HepG2 (cell line): ENCODE measurements at regions of chr10 and their contacts with region 1.

Region 1: GRCh38 chr10:78972947-78973900 is 95.5 kb upstream of the ZMIZ1 start:
- DNase-seq: peak; percentile 97
- ATAC-seq: peak; percentile 72
- H3K4me3 ChIP-seq: peak overlapping the region; percentile 40 to 76 (median 59)
- H3K27ac ChIP-seq: peak overlapping the region; percentile 98
- H3K4me1 ChIP-seq: peaks cover 92% of the 10 kb centered on the region
- H3K27me3 ChIP-seq: no peaks in the 10 kb centered on the region
- CTCF ChIP-seq: peak; percentile 18; the same call in 1 of the 2 replicates
- EP300 ChIP-seq: peak; percentile 21 to 74; a peak in 2 of 4 replicates
- POLR2A ChIP-seq: peak in 1 of 2 experiments; percentile 80; a peak in 2 of 4 replicates
- RAD21 ChIP-seq: peak; percentile 65; the same call in 1 of the 2 replicates

Region 2: GRCh38 chr10:78458983-78459638 is 514.1 kb before region 1 on chr10:
- CTCF ChIA-PET with region 1: no interaction called
- POLR2A ChIA-PET with region 1: interaction called, 5 read pairs
- in situ Hi-C with region 1: no loop called
- intact Hi-C with region 1: loop called (anchors 2 kb)
- DNase-seq: peak; percentile 99
- ATAC-seq: peak; percentile 97
- H3K4me3 ChIP-seq: peak overlapping the region in 1 of 3 experiments; percentile 37; a peak in 1 of 6 replicates
- H3K27ac ChIP-seq: peak overlapping the region; percentile 97
- H3K4me1 ChIP-seq: peaks cover 72% of the 10 kb centered on the region
- H3K27me3 ChIP-seq: no peaks in the 10 kb centered on the region
- CTCF ChIP-seq: peak; percentile 16; the same call in 1 of the 2 replicates
- EP300 ChIP-seq: peak; percentile 99 to 100
- POLR2A ChIP-seq: peak; percentile 39 to 63; a peak in 2 of 4 replicates
- RAD21 ChIP-seq: no peak

Region 3: GRCh38 chr10:78817361-78817760 is 155.9 kb before region 1 on chr10:
- CTCF ChIA-PET with region 1: no interaction called
- POLR2A ChIA-PET with region 1: no interaction called
- in situ Hi-C with region 1: no loop called
- intact Hi-C with region 1: no loop called
- DNase-seq: no peak
- ATAC-seq: no peak
- H3K4me3 ChIP-seq: no peak overlapping the region
- H3K27ac ChIP-seq: no peak overlapping the region
- H3K4me1 ChIP-seq: peaks cover 11% of the 10 kb centered on the region
- H3K27me3 ChIP-seq: 0 out of 5 replicates have a peak, but pooled peaks cover 0 to 5% of the 10 kb centered on the region in 2 experiments
- CTCF ChIP-seq: no peak
- EP300 ChIP-seq: no peak
- POLR2A ChIP-seq: no peak
- RAD21 ChIP-seq: no peak

Region 4: DNA sequence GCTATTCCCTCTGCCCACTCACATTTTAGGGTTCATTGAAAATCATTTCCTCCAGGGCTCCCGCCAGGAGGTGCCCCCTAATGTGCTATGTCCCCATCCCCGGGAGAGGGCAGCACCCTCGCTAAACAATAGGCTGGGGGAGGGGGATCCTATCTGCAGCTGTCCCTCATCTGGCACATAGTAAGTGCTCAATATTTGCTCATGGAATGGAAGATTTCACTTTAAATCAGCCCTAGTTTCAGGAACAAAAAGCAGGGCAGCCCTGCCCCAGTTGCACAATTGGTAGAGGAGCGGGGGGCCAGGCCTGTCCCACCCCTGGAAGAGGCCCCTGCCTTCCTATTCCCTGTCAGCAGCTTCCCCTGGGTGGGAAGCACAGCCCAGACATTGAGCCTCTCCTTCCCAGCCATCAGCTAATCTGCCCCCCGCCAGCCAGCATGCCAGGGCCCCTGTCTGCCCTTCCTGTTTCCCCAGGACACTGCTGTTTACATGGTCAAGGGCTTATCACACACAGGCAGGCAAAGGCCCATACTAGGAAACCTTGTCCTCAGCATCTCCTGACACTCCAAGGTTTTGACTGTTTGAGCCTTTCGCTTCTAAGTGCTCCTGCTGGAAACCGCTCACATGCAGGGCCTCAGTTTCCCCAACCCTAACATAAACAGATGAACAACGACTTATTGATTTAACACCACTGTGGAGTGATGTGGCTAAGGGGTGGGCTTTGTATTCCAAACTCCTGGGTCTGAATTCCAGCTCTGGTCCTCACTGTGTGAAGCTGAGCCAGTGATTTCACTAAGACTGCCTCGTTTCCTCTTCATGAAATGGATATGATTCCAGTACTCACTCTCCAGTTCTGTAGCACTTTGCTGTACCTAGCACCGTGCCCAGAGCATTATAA is 35.2 kb before region 1 on chr10:
- CTCF ChIA-PET with region 1: no interaction called
- POLR2A ChIA-PET with region 1: interaction called, 3 read pairs
- in situ Hi-C with region 1: no loop called
- intact Hi-C with region 1: loop called (anchors 2 kb)
- DNase-seq: peak; percentile 61
- ATAC-seq: peak; percentile 91
- H3K4me3 ChIP-seq: peak overlapping the region in 1 of 3 experiments; percentile 39; a peak in 1 of 6 replicates
- H3K27ac ChIP-seq: no peak overlapping the region
- H3K4me1 ChIP-seq: peaks cover 38% of the 10 kb centered on the region
- H3K27me3 ChIP-seq: peaks cover 0 to 7% of the 10 kb centered on the region in 2 experiments; a peak in 3 of 5 replicates
- CTCF ChIP-seq: peak; percentile 48
- EP300 ChIP-seq: peak in 1 of 2 experiments; percentile 42; a peak in 2 of 4 replicates
- POLR2A ChIP-seq: no peak
- RAD21 ChIP-seq: peak; percentile 51

Region 5: DNA sequence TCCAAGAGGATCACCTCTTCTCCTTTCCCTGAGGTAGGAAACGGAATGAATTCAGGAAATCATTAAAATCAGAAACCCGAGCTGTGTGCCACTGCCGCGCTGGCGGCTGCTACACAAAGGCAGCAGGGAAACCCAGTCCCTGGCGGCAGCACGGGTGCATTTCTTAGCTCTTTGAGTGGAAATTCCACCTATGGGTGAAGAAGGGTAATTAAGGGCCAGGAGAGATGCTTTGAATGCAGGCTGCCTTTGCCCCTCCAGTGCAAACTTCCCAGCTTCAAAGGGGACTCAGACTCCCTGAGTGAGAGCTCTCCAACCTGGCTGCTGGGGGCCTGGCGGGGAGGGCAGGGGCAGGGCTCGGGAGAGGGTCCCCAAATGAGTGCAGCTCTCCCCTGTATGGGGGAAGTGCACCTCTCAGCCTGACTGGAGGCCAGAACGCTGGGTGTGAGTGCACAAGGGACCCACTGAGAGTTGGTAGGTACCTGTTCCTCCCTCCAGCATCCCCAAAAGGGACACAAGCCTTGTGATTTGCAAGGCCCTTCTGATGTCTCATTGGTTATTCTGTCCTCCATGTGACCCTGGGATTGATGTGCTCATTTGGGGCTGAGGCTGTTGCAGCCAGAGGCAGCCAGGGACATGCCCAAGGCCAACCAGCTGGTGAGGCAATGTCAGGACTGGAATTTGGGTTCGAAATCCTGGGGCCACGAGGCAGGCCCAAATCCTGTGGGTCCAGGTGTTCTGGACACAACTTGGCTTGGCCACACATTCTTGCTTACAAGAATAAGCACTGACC is 79.3 kb after region 1 on chr10:
- CTCF ChIA-PET with region 1: no interaction called
- POLR2A ChIA-PET with region 1: interaction called, 10 read pairs
- in situ Hi-C with region 1: loop called (anchors 5 kb)
- intact Hi-C with region 1: no loop called
- DNase-seq: peak; percentile 52
- ATAC-seq: peak; percentile 72
- H3K4me3 ChIP-seq: no peak overlapping the region; a peak in 1 of 6 replicates
- H3K27ac ChIP-seq: no peak overlapping the region
- H3K4me1 ChIP-seq: peaks cover 85% of the 10 kb centered on the region
- H3K27me3 ChIP-seq: peaks cover 0 to 3% of the 10 kb centered on the region in 2 experiments; a peak in 2 of 5 replicates
- CTCF ChIP-seq: peak; percentile 27
- EP300 ChIP-seq: no peak
- POLR2A ChIP-seq: no peak
- RAD21 ChIP-seq: no peak

Region 6: DNA sequence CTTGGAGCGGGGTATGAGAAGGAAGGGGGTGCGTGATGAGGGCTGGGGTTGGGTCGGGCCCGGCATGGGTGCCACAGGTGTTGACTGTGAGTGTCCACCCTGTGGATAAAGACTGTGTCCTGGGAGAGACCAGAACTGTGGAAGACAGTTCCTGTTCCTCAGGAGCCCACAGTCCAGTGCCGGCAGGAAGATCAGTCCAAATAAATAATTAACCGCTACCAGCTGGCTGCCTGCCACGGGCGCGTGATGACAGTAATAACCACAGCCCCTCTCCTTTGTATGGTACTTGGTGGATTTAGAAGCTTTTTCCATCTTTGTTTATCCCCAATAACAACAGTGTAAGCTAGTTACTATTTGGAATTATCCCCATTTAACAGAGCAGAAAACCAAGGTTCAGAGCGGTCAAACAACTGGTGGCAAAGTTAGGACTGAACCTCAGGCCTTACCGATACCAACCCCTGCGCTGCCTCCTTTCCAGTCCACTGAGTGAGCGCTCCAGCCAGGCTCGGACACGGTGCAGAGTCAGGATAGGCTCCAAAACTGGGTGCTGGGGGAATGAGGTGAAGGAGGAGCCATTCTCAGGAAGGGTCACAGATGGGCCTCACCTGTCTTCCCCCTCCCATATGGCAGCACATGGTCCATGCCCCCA is 100.7 kb after region 1 on chr10:
- CTCF ChIA-PET with region 1: no interaction called
- POLR2A ChIA-PET with region 1: interaction called, 54 read pairs
- in situ Hi-C with region 1: no loop called
- intact Hi-C with region 1: no loop called
- DNase-seq: peak; percentile 61
- ATAC-seq: peak; percentile 1; the same call in 2 of the 3 replicates
- H3K4me3 ChIP-seq: peak overlapping the region in 2 of 3 experiments; percentile 18 to 98; a peak in 4 of 6 replicates
- H3K27ac ChIP-seq: peak overlapping the region; percentile 91
- H3K4me1 ChIP-seq: peaks cover 76% of the 10 kb centered on the region
- H3K27me3 ChIP-seq: no peaks in the 10 kb centered on the region; a peak in 1 of 5 replicates
- CTCF ChIP-seq: no peak
- EP300 ChIP-seq: no peak
- POLR2A ChIP-seq: no peak
- RAD21 ChIP-seq: no peak

Region 7: GRCh38 chr10:79189853-79190435 is 216.7 kb after region 1 on chr10:
- CTCF ChIA-PET with region 1: no interaction called
- POLR2A ChIA-PET with region 1: interaction called, 10 read pairs
- in situ Hi-C with region 1: loop called (anchors 5 kb)
- intact Hi-C with region 1: loop called (anchors 5 kb)
- DNase-seq: no peak
- ATAC-seq: no peak
- H3K4me3 ChIP-seq: no peak overlapping the region
- H3K27ac ChIP-seq: no peak overlapping the region
- H3K4me1 ChIP-seq: peaks cover 71% of the 10 kb centered on the region
- H3K27me3 ChIP-seq: no peaks in the 10 kb centered on the region
- CTCF ChIP-seq: no peak
- EP300 ChIP-seq: no peak
- POLR2A ChIP-seq: no peak
- RAD21 ChIP-seq: no peak